ENCODE measurements at regions of chr2 and their contacts with region 1.

Region 1: DNA sequence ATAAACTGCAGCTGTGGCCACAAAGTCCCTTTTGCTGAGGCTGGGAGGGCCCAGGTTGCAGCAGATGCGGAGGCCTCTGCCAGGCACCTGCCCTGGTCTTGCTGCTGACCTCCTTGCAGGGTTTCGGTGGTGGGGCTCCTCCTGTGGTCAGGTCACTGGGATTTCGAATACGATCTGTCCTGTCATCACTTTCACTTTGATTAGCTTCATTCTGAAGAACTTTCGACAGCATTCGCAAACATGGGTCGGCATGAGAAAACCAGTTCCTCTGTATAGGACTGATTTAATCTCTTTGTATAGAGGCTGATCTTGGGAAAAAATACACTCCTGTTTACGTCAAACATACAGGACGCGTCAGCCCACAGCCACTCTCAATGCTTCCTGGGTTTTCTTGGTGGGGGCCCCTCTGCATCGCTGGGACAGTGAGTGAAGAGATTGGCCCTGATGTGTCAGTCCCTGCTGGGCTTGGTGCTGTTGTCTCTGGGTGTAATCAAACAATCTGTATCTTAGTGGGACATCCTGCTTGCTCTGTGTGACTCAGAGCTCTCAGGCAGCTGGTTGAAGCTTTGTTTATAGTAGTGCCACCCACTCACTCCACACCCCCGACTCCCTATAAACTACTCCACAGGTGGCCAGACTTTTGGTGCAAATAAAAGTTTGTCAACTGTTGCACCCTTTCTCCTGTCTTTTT is 209.4 kb upstream of the CXCR4 start:
- DNase-seq: peak; percentile 53
- ATAC-seq: peak; percentile 75
- H3K4me3 ChIP-seq: peak overlapping the region in 4 of 5 experiments; percentile 6 to 32 (median 16)
- H3K4me3 Mint-ChIP-seq: peak overlapping the region; percentile 69
- H3K27ac ChIP-seq: peak overlapping the region; percentile 66
- H3K27ac Mint-ChIP-seq: peak overlapping the region; percentile 88
- H3K4me1 ChIP-seq: peaks cover 33 to 48% of the 10 kb centered on the region in 2 donors
- H3K4me1 Mint-ChIP-seq: peaks cover 57% of the 10 kb centered on the region
- H3K27me3 ChIP-seq: no peaks in the 10 kb centered on the region
- H3K27me3 Mint-ChIP-seq: no peaks in the 10 kb centered on the region
- CTCF ChIP-seq: no peak

Region 2: GRCh38 chr2:136284226-136285119 is 42.8 kb before region 1 on chr2:
- CTCF ChIA-PET with region 1: no interaction called
- POLR2A ChIA-PET with region 1: interaction called, 7 read pairs
- intact Hi-C with region 1: loop called (anchors 2 kb)
- DNase-seq: peak; percentile 35
- ATAC-seq: peak; percentile 50
- H3K4me3 ChIP-seq: peak overlapping the region in 1 of 5 experiments; percentile 20
- H3K4me3 Mint-ChIP-seq: peak overlapping the region; percentile 80
- H3K27ac ChIP-seq: peak overlapping the region; percentile 54 to 67
- H3K27ac Mint-ChIP-seq: peak overlapping the region; percentile 86
- H3K4me1 ChIP-seq: peaks cover 50 to 68% of the 10 kb centered on the region in 2 donors
- H3K4me1 Mint-ChIP-seq: peaks cover 68% of the 10 kb centered on the region
- H3K27me3 ChIP-seq: no peaks in the 10 kb centered on the region
- H3K27me3 Mint-ChIP-seq: no peaks in the 10 kb centered on the region
- CTCF ChIP-seq: no peak

Region 3: GRCh38 chr2:136310005-136310495 is 17.3 kb before region 1 on chr2:
- CTCF ChIA-PET with region 1: interaction called, 4 read pairs
- POLR2A ChIA-PET with region 1: no interaction called
- intact Hi-C with region 1: loop called (anchors 2 kb)
- DNase-seq: peak; percentile 26
- ATAC-seq: peak; percentile 37
- H3K4me3 ChIP-seq: no peak overlapping the region
- H3K4me3 Mint-ChIP-seq: peak overlapping the region; percentile 27
- H3K27ac ChIP-seq: no peak overlapping the region
- H3K27ac Mint-ChIP-seq: no peak overlapping the region
- H3K4me1 ChIP-seq: peaks cover 8 to 11% of the 10 kb centered on the region in 2 donors
- H3K4me1 Mint-ChIP-seq: peaks cover 32% of the 10 kb centered on the region
- H3K27me3 ChIP-seq: no peaks in the 10 kb centered on the region
- H3K27me3 Mint-ChIP-seq: no peaks in the 10 kb centered on the region
- CTCF ChIP-seq: no peak

Region 4: GRCh38 chr2:136356122-136357006 is 29.1 kb after region 1 on chr2:
- CTCF ChIA-PET with region 1: no interaction called
- POLR2A ChIA-PET with region 1: no interaction called
- intact Hi-C with region 1: no loop called
- DNase-seq: no peak
- ATAC-seq: no peak
- H3K4me3 ChIP-seq: no peak overlapping the region
- H3K4me3 Mint-ChIP-seq: no peak overlapping the region
- H3K27ac ChIP-seq: no peak overlapping the region
- H3K27ac Mint-ChIP-seq: no peak overlapping the region
- H3K4me1 ChIP-seq: peaks cover 0 to 3% of the 10 kb centered on the region in 2 donors
- H3K4me1 Mint-ChIP-seq: peaks cover 9% of the 10 kb centered on the region
- H3K27me3 ChIP-seq: no peaks in the 10 kb centered on the region
- H3K27me3 Mint-ChIP-seq: no peaks in the 10 kb centered on the region
- CTCF ChIP-seq: no peak

Region 5: GRCh38 chr2:136378712-136379595 is 51.6 kb after region 1 on chr2:
- CTCF ChIA-PET with region 1: interaction called, 6 read pairs
- POLR2A ChIA-PET with region 1: interaction called, 4 read pairs
- intact Hi-C with region 1: loop called (anchors 2 kb)
- DNase-seq: peak; percentile 90
- ATAC-seq: peak; percentile 29
- H3K4me3 ChIP-seq: peak overlapping the region in 1 of 5 experiments; percentile 8
- H3K4me3 Mint-ChIP-seq: peak overlapping the region; percentile 49
- H3K27ac ChIP-seq: peak overlapping the region in 1 of 2 donors; percentile 71
- H3K27ac Mint-ChIP-seq: peak overlapping the region; percentile 97
- H3K4me1 ChIP-seq: peaks cover 61 to 65% of the 10 kb centered on the region in 2 donors
- H3K4me1 Mint-ChIP-seq: peaks cover 81% of the 10 kb centered on the region
- H3K27me3 ChIP-seq: no peaks in the 10 kb centered on the region
- H3K27me3 Mint-ChIP-seq: no peaks in the 10 kb centered on the region
- CTCF ChIP-seq: peak; percentile 88

Measured in B cell (primary cell).